PC-9 (cell line): ENCODE measurements at regions of chr12 and their contacts with region 1.

Region 1: DNA sequence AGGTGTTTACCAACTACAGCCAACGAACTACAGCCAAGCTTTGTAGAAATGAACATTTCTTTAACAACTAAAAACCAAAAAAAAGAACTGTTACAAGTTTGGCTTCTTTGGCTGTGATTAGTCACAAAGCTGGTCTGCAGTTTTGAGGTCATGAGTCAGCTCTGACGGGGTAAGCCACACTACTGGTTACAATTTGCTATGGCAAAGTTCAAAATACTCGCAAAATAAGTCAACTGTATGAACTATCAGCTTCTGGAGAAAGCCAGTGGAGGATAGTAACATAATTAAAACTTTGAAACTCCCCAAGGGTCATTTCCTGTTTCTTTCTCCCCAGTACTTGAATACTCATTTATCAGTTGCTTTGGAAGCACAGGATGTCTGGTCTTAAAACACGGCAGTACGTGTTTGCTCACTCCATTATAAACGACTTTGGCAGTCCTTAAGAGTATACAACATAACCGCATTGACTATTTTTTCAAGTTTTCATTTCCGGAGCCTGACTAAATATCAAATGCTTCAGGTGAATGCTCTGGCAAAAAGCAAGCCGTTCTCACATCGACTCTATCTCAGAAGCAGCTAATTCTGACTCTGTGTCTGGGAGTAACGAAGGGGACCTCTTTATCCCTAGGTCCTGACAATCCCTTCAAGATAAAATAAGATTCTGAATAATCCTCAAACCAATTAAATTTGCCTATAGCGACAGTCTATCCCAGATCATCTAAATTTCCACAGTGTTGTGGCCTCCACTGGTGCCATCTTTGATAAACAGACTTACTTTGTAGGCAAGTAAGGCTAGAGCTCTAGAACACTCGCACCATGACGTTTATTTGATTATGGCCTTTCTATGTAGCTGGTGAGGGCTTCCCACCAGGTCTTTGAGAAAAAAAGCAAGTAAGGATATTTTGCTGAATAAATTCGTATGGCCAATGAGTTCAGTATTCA is 10.6 kb downstream of the PHLDA1 start:
- DNase-seq: peak; percentile 58 to 95
- H3K4me3 ChIP-seq: peak overlapping the region; percentile 55
- H3K27ac ChIP-seq: peak overlapping the region; percentile 100
- H3K4me1 ChIP-seq: peaks cover 79% of the 10 kb centered on the region
- H3K27me3 ChIP-seq: no peaks in the 10 kb centered on the region
- CTCF ChIP-seq: no peak

Region 2: DNA sequence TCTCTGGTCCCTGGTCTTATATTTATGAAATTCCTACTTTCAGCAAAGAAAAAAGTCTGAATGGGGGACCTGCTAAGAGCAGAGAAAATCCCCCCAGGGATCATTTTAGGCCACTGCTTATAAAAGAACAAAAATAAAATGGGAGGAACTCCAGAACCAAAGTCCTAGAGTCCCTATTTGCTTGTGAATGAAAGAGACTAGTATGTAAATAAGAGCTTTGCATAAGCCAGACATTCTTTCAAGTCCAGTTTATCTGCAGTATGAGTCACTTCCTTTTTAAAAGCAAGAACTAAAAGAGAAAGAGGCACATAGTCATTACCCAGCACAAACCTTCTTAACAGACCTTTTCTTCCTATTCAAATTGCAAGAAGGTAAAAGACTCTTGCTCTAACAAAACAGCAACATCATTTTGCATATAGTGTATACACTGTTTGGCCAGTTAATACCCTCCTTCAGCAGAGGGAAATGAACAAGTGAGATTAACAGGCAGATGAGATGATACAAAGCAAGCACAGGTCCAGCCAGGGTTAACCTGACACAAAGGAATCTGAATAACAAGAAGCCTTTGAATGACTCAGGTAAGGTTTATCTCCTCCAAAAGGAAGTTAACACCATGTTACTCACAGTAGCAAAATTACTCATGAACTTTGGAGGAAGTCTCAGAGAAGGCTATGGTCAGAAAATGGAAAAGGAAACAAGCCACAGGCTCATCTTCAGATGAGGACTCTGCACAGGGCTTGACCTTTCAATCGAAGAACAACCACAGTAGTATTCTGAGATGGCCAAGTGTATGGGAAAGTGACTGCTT is 76.7 kb before region 1 on chr12:
- CTCF ChIA-PET with region 1: no interaction called
- POLR2A ChIA-PET with region 1: interaction called, 16 read pairs
- intact Hi-C with region 1: no loop called
- DNase-seq: peak; percentile 43 to 97
- H3K4me3 ChIP-seq: peak overlapping the region; percentile 22; the same call in 1 of the 2 replicates
- H3K27ac ChIP-seq: peak overlapping the region; percentile 99
- H3K4me1 ChIP-seq: peaks cover 53% of the 10 kb centered on the region
- H3K27me3 ChIP-seq: no peaks in the 10 kb centered on the region
- CTCF ChIP-seq: no peak

Region 3: GRCh38 chr12:75982974-75983660 is 37.9 kb before region 1 on chr12:
- CTCF ChIA-PET with region 1: no interaction called
- POLR2A ChIA-PET with region 1: interaction called, 3 read pairs
- intact Hi-C with region 1: loop called (anchors 1 kb)
- DNase-seq: no peak
- H3K4me3 ChIP-seq: no peak overlapping the region
- H3K27ac ChIP-seq: no peak overlapping the region
- H3K4me1 ChIP-seq: peaks cover 69% of the 10 kb centered on the region
- H3K27me3 ChIP-seq: no peaks in the 10 kb centered on the region
- CTCF ChIP-seq: no peak

Region 4: GRCh38 chr12:76037130-76038103 is 16.4 kb after region 1 on chr12:
- CTCF ChIA-PET with region 1: interaction called, 3 read pairs
- POLR2A ChIA-PET with region 1: interaction called, 24 read pairs
- intact Hi-C with region 1: no loop called
- DNase-seq: peak in 1 of 2 experiments; percentile 20
- H3K4me3 ChIP-seq: no peak overlapping the region
- H3K27ac ChIP-seq: no peak overlapping the region
- H3K4me1 ChIP-seq: peaks cover 32% of the 10 kb centered on the region
- H3K27me3 ChIP-seq: no peaks in the 10 kb centered on the region
- CTCF ChIP-seq: peak; percentile 81

Region 5: GRCh38 chr12:76763743-76764675 is 743.0 kb after region 1 on chr12 and contains the start of gene ZDHHC17:
- CTCF ChIA-PET with region 1: no interaction called
- POLR2A ChIA-PET with region 1: interaction called, 18 read pairs
- intact Hi-C with region 1: no loop called
- DNase-seq: peak; percentile 79 to 96
- H3K4me3 ChIP-seq: peak within 1 kb of the TSS; percentile 99
- H3K27ac ChIP-seq: peak within 1 kb of the TSS; percentile 92
- H3K4me1 ChIP-seq: peaks cover 12% of the 10 kb centered on the region
- H3K27me3 ChIP-seq: no peaks in the 10 kb centered on the region
- CTCF ChIP-seq: no peak
- total RNA-seq, gene ZDHHC17: 24.7 and 25.5 TPM in 2 replicates